ENCODE measurements at regions of chr1 and their contacts with region 1.

Region 1: DNA sequence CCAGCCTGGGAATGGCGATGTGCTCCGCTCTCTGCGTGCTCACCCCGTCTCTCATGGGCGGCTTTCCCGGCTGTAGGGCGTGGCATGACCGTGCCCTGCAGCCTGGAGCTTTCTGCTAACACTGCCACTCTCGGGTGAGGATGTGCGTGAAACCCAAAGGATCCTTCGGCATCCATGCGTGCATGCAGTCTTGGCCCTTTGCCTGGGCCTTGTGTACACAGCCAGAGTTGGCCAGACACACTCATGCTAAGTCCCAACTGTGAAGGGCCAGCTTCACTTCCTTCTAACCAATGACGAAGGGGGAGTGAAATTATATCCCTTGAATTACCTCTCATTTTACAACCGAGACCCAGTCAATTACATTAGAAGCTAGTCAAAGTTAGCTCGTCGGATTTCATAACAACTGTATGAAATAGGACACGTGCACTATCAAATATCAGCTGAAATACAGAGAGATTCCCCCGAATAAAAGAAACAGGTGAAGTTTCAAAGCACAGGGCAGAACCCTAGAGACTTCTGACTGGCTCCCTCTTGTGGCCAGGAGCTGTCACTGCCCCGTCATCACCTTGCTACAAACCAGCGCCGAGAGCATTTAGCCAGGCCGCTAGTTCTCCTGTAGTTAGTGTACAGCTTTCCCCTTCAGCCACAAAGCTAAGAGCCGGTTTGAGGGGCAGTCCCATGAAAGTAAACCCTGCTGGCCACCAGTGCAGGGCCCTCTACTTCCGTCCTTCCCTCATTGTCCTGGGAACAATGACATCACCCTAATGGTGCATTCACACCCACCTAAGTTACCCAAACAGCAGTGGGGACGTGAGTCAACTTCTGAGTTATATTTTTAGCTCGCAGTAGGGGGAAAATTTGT is 63.4 kb upstream of the COA6 start:
- DNase-seq: peak; percentile 88

Region 2: DNA sequence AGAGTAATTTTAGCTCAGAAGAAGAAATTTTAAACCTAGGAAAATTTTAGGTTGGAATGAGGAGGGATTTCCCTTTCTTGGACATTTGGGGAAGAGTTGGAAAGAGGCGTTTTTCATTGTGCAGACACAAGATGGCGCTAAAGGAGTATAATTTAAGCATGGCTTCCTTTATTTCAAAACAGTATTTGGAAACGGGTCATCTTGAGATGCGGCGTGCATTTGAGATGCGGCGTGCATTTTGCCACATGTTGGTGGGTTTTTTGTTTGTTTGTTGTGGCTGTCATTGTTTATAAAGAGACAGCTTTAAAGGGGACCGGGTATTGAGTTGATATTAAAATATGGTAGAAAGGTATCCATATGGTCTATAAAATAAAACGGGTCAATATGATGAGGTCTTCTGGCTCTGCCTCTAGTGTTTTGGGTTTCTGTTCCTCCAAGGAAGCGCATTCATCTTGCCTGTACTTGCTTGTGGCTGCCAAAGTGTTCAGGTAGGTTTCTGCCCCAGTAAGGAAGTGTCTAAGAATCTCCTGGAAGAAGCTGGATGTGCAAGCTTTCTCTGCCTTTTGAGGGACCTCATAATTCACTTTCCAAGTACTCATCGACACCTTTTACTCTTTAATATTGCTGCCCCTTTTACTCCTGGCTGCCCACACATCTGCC is 195.1 kb before region 1 on chr1:
- CTCF ChIA-PET with region 1: interaction called, 18 read pairs
- POLR2A ChIA-PET with region 1: no interaction called
- DNase-seq: peak; percentile 61

Region 3: DNA sequence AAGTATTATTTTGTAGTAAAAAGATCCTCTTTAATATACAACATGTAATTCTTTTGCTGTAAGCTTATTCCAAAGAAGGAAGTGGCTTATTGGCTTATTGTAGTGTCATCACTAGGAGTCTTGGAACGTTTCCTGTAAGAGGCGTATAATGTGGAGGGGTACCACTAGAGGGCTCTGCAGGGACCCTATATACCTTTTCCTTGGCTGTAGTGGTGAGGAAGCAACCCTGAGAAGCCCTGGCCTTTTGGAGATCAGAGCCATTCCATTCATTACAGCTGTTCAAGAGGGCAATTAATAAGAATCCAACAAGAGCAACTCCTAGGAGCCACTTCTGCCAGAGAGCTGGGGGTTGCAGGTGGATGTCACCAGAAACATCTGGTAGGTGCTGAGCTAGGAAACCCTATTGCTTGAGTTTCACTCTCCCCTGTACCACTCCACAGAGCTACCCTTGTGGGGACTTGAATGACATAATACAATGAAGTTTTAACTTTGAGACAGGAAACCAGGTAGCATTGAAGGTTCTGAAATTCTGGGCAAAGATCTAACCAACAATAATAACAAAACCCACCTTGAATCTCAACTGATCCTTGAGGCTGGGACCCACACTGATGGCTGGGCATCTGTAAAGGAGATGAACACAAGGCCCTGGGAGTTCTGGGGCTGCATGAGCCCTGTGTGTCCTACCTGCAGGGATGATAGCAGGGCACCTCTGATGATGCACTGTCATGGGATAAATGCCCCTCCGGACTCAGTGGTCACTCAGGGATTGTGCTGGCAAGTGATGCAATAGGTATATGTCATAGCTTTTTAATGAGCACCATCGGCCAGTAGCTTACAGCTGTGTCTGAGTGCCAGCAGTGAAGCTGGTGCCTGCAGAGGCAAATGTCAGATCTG is 96.8 kb before region 1 on chr1:
- CTCF ChIA-PET with region 1: interaction called, 15 read pairs
- POLR2A ChIA-PET with region 1: no interaction called
- DNase-seq: peak; percentile 73

Region 4: DNA sequence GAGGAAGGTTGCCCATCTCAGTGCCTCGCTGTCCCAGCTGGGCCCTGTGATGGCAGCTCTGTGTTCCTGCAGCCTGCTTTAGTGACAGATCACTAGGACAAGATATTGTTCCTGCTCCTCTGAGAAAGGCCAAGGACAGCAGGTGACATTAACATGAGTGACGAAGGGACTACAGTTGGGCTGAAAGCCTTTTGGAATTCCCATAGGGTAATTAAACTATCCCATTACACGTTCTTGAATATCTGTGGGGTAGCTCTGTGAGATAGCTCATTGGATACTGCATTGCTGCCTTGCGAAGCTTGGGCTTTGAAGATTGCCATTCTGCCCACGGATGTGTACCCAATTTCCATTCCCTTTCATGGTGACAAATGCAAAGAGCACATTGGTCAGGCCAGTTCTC is 14.8 kb before region 1 on chr1:
- CTCF ChIA-PET with region 1: interaction called, 18 read pairs
- POLR2A ChIA-PET with region 1: no interaction called
- DNase-seq: no peak

Region 5: GRCh38 chr1:234326497-234327366 is 16.9 kb after region 1 on chr1:
- CTCF ChIA-PET with region 1: interaction called, 16 read pairs
- POLR2A ChIA-PET with region 1: interaction called, 3 read pairs
- DNase-seq: peak; percentile 84

Region 6: DNA sequence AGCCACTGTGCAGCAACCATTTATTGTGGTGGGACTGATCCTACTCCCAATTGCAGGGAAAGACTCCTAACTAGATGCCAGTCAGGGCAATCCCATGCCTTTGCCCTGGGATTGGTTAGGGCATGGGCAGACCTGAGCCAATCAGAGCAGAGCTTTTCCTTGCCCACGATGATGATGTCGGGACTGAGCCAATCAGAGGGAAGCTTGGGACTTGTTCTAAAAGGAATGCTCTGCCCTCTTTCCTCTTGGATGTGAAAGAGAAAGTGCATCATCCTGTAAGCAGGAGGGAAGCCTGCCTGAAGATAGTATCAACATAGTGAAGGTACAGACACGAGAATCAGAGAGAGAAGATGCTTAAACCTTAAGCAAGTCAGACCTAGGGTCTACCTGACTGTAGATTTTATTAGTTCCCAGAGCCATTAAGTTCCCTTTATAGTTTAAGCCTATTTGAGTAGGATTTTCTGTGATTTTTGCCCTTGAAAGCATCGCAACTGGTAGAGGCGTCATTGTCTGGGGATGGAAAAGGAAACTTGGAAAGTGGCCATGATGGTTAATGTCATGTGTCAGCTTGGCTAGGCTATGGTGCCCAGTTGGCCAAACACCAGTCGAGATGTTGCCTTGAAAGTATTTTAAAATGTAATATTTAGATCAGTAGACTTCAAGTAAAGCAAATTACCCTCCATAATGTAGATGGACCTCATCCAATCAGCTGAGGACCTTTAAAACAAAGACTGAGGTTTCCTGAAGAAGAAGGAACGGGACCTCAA is 280.2 kb after region 1 on chr1:
- CTCF ChIA-PET with region 1: no interaction called
- POLR2A ChIA-PET with region 1: no interaction called
- DNase-seq: no peak

Measured in HEK293T (cell line).